Activated B cell treated with CpG ODN at 0.5 μM for 24 hours (primary cell): ENCODE measurements at regions of chr11 and their contacts with region 1.

Region 1: GRCh38 chr11:111870886-111871692 is at the start of gene ALG9:
- DNase-seq: peak; percentile 90
- ATAC-seq: peak; percentile 89
- H3K4me3 Mint-ChIP-seq: peak within 1 kb of the TSS; percentile 93
- H3K27ac Mint-ChIP-seq: peak within 1 kb of the TSS; percentile 92
- H3K4me1 Mint-ChIP-seq: peaks cover 13% of the 10 kb centered on the region
- H3K27me3 Mint-ChIP-seq: no peaks in the 10 kb centered on the region
- CTCF ChIP-seq: no peak
- total RNA-seq, gene ALG9: 17.0 and 20.1 TPM in 2 replicates

Region 2: DNA sequence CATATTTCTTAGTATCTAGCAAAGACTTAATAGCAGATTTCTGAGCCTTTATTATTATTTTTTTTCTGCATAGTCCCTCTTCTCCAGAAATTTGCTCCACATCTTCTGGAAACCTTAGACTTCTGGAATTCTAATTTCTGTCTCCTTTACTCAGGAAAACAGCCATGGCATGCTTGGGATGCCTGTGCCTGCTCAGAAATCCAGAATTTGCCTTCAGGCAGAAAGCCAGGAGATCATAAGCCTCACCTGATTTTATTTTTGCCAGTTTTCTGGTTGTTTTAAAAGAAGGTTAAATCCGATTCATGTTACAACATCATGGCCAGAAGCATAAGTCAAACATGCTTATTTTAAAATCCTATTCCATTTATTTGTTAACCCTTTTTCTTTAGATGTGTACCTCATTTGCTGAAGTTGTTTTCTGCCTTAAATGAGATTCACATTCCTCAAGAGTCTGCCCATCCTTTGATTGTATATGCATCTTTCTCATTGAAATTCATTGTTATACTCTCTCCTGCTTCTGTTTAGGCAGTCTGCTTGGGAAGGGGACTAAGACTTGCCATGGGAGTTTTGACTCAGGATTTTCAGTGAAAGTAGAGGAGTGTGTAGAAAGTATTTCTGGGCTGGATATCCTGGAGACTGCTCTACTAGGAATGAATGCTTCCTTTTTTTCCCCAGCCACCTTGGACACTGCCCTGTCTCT is 231.7 kb before region 1 on chr11:
- CTCF ChIA-PET with region 1: no interaction called
- POLR2A ChIA-PET with region 1: interaction called, 12 read pairs
- intact Hi-C with region 1: no loop called
- DNase-seq: no peak
- ATAC-seq: no peak
- H3K4me3 Mint-ChIP-seq: no peak overlapping the region
- H3K27ac Mint-ChIP-seq: no peak overlapping the region
- H3K4me1 Mint-ChIP-seq: peaks cover 5% of the 10 kb centered on the region
- H3K27me3 Mint-ChIP-seq: no peaks in the 10 kb centered on the region
- CTCF ChIP-seq: no peak

Region 3: DNA sequence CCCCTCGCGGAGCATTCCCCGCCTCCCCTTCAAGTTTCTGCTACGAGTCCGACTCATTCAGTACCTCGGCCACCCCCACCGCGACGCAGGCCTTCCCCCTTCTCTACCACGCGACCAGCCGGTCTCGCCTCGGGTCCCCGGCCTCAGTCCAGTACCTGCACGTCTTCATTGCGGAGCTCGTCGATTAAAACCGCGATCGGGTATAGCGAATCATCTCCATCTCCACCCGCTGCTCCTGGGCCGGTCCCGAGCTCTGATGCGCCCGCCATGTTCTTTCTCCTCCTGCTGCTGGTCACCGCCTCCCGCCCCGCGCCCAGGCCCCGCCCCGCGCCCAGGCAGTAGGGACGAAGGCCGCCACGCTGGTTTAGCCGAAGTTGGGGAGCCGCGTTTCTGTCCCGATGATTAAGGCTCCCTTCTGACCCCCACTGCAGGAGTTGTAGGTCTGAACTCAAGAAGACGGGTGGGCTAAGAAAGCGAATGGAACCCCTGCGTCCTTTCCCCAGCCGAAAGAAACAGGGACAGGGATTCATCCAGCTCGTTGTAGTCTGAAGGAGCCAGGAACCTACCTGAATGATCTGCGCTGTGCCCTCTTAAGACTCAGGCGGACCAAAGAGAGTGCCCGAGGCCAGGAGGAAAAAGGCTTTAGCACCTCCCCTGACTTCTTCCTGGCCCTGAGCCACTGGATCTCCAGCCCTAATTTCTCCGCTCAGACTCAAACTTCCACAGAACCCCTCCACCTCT is 104.8 kb before region 1 on chr11 and contains the start of gene PPP2R1B:
- CTCF ChIA-PET with region 1: interaction called, 4 read pairs
- POLR2A ChIA-PET with region 1: interaction called, 3 read pairs
- intact Hi-C with region 1: loop called (anchors 5 kb)
- DNase-seq: peak; percentile 70
- ATAC-seq: peak; percentile 97
- H3K4me3 Mint-ChIP-seq: peak within 1 kb of the TSS; percentile 100
- H3K27ac Mint-ChIP-seq: peak within 1 kb of the TSS; percentile 93
- H3K4me1 Mint-ChIP-seq: peaks cover 25% of the 10 kb centered on the region
- H3K27me3 Mint-ChIP-seq: no peaks in the 10 kb centered on the region
- CTCF ChIP-seq: no peak
- total RNA-seq, gene PPP2R1B: 36.2 and 37.9 TPM in 2 replicates

Region 4: DNA sequence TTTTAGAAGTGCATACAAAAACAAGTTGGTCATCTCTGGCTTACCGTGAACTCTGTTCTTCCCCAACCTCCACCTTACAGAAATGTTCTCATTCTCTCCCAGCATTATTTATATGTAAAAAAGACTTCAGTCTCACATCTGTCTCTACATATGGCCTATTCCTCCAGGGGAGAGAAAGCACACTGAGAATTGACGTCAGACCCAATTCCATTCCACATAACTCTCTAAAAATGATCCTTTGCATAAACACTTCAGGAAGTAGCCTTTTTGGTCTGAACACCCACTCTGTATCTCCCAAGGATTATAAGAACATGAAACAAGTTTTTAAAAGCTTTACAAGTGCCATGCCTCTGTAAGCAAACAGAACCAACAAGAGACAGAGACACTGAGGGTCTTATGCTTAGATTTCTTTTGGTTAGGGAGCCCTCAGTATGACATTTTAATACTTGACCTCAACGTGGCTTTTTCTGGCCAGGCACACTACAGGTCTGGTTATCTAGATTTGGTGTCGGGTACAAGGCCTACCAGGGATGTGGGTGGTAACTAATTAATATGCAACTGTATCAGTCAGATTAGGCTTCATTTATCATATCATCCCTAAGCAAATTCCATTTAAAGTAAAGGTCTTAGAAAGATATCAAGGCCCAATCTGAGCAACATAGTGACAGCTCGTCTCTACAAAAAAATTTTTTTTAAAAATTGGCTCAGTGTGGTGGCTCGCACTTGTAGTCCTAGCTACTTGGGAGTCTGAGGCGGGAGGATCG is 56.4 kb before region 1 on chr11:
- CTCF ChIA-PET with region 1: no interaction called
- POLR2A ChIA-PET with region 1: no interaction called
- intact Hi-C with region 1: no loop called
- DNase-seq: no peak
- ATAC-seq: no peak
- H3K4me3 Mint-ChIP-seq: no peak overlapping the region
- H3K27ac Mint-ChIP-seq: no peak overlapping the region
- H3K4me1 Mint-ChIP-seq: no peaks in the 10 kb centered on the region
- H3K27me3 Mint-ChIP-seq: no peaks in the 10 kb centered on the region
- CTCF ChIP-seq: no peak

Region 5: DNA sequence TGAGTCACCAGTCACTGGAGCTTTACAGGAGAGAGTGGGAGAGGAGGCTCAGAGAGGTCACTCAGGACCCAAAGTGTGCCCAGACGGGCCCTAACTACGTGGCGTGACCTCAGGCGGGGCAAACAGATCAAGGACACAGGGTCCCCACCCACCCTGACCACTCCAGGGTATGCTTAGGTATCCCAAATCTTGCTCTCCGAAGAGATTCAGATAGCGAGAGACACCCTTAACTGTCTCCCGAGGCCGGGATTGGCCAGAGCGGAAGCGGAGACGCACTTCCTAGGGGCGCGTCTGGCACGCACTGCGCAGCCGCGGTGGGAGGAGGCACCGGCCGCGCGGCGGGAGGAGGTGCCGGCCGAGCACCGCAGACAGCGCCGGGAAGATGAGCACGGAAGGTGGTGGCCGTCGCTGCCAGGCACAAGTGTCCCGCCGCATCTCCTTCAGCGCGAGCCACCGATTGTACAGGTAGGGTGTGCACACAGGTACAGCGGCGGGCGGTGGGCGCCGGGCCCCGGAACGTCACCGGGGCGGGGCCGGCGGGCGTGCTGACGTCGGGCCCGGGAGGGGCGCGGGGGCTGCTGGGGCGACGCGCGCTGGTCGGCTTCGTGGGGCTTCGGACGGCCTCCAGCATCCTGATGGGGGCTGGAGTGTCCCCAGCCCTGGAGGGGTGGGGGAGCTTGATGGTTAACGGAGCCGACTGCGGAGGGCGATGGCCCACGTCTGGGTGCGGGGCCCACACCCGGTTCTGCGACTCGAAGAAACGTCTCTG is 355.2 kb after region 1 on chr11 and contains the start of gene PTS:
- CTCF ChIA-PET with region 1: no interaction called
- POLR2A ChIA-PET with region 1: interaction called, 7 read pairs
- intact Hi-C with region 1: loop called (anchors 2 kb)
- DNase-seq: peak; percentile 87
- ATAC-seq: peak; percentile 93
- H3K4me3 Mint-ChIP-seq: peak within 1 kb of the TSS; percentile 92
- H3K27ac Mint-ChIP-seq: peak within 1 kb of the TSS; percentile 96
- H3K4me1 Mint-ChIP-seq: peaks cover 13% of the 10 kb centered on the region
- H3K27me3 Mint-ChIP-seq: no peaks in the 10 kb centered on the region
- CTCF ChIP-seq: no peak
- total RNA-seq, gene PTS: 22.7 and 30.4 TPM in 2 replicates

Region 6: GRCh38 chr11:112270551-112271174 is 399.6 kb after region 1 on chr11:
- CTCF ChIA-PET with region 1: no interaction called
- POLR2A ChIA-PET with region 1: interaction called, 11 read pairs
- intact Hi-C with region 1: no loop called
- DNase-seq: no peak
- ATAC-seq: no peak
- H3K4me3 Mint-ChIP-seq: no peak overlapping the region
- H3K27ac Mint-ChIP-seq: peak overlapping the region; percentile 84
- H3K4me1 Mint-ChIP-seq: peaks cover 25% of the 10 kb centered on the region
- H3K27me3 Mint-ChIP-seq: no peaks in the 10 kb centered on the region
- CTCF ChIP-seq: no peak